AG04449 (cell line): ENCODE measurements at regions of chr15 and their contacts with region 1.

Region 1: DNA sequence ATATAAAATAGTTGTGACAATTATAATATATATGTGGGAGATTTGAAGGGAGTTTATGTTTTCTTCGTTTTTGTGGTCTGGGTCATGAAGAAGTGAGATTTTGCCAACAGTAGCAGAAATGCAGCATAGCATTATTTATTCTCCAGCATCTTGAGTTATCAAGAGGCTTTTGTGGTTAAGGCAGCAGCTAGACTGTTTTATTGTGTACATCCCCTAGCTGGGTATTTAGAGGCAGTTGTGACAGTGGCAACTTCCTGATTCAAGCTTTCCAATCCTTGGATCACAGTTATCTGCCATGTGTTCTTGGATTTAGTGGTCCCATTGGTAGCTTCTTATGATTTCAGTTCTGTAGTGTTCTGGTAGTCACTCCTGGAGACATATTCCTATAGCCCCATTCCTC is 29.0 kb downstream of the ARIH1 start:
- DNase-seq: no peak
- H3K4me3 ChIP-seq: no peak overlapping the region
- CTCF ChIP-seq: no peak

Region 2: GRCh38 chr15:72491768-72492167 is 11.4 kb before region 1 on chr15:
- CTCF ChIA-PET with region 1: interaction called, 10 read pairs
- POLR2A ChIA-PET with region 1: interaction called, 3 read pairs
- DNase-seq: peak; percentile 44
- H3K4me3 ChIP-seq: no peak overlapping the region
- CTCF ChIP-seq: no peak

Region 3: DNA sequence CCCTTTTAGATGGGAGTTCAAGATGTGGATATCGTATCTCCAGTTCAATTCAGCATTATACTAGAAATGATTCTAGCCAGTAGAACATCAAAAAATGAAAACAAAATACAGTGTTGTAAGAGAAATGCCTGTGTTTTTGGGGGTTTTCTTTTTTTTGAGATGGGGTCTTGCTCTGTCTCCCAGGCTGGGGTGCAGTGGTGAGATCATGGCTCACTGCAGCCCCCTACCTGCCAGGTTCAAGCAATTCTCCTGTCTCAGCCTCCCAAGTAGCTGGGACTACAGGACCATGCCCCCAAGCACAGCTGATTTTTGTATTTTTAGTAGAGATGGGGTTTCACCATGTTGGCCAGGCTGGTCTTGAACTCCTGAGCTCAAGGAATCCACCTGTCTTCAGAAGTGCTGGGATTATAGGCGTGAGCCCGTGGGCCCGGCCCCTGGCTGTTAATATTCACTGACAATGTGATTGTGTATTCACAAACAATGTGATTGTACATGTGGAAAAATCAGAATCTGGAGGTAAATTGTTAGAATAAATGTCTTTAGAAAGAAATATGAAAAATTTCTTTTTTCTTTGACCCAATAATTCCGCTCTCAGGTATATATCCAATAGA is 29.9 kb after region 1 on chr15:
- CTCF ChIA-PET with region 1: no interaction called
- POLR2A ChIA-PET with region 1: no interaction called
- DNase-seq: no peak
- H3K4me3 ChIP-seq: no peak overlapping the region
- CTCF ChIP-seq: no peak

Region 4: DNA sequence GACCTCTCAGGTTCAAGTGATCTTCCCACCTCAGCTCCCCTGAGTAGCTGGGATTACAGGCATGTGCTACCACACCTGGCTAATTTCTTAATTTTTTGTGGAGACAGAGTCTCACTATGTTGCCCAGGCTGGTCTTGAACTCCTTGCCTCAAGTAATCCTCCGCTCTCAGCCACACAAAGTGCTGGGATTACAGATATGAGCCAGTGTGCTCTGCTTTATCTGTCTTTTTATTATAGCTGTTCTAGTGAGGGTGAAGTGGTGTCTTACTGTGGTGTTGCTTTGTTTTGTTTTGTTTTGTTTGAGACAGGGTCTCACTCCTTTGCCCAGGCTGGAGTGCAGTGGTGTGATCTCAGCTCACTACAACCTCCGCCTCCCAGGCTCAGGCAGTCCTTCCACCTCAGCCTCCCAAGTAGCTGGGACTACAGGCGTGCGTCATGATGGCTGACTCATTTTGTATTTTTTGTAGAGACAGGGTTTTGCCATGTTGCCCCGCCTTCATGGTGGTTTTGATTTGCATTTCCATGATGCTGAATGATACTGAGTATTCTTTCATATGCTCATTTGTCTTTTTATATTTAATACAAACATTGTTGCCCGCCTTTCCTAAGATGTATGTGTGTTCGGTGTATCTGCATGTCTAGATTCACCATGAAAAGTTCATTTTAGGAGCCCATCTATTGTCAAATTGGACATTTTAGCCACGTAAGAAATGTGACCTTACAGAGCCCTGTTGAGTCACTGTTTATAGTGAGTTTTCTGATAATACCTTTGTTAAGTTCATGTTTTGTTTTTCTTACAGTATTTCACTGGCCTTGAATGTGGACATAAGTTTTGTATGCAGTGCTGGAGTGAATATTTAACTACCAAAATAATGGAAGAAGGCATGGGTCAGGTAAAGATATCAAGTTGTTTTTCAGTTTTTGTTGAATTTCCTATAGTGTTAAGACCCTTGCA is 51.6 kb after region 1 on chr15:
- CTCF ChIA-PET with region 1: no interaction called
- POLR2A ChIA-PET with region 1: no interaction called
- DNase-seq: no peak
- H3K4me3 ChIP-seq: no peak overlapping the region
- CTCF ChIP-seq: no peak

Region 5: DNA sequence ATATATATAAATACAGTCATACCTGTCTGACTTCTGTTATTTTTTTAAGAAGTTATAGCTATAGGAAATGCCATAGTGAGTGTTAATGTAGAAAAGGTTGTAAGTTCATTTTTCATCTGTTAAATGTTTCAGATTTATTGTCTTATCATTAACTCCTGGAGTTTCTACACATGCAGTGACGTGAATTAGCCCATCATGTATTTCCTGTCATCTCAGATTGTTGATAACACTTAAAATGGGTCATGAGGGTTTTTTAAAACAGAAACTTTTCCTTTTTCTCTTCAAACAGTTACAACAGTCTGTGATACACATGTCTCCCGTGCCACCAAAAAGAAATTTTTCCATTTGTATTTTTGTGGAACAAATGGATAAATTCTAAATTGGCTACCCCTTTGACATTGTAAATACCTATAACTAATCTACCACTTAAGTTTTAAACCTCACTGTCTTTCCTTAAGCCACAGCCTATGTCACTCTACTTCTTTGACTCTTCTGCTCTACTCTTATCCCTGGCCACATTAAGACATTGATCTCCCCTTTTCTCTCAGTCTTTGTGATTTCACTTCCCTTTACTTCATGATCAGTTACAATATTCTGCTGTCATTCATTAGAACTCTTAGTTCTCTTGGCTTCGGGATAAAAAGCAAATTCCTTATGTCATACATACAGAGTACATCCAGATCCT is 638.2 kb after region 1 on chr15:
- CTCF ChIA-PET with region 1: no interaction called
- POLR2A ChIA-PET with region 1: no interaction called
- DNase-seq: no peak
- H3K4me3 ChIP-seq: no peak overlapping the region
- CTCF ChIP-seq: no peak